ENCODE measurements at regions of chr17 and their contacts with region 1.

Region 1: DNA sequence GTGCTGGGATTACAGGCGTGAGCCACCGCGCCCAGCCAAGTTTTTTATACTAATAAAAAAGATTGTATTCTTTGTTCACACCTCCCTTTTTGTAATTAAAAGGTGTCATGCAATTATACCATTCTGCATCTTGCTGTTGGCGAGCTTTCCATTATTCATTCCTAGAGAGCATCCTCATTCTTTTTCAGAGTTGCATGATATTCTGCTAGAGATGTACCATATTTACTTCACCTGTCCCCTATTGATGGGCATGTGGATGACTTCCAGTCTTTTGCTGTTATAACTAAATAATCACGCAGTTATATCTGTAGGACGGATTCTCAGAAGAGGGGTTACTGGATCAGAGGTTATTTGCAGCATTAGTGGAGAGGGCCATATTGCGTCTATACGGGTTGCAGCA is 17.0 kb downstream of the SGSM2 start:
- DNase-seq: no peak
- H3K4me3 ChIP-seq: no peak overlapping the region
- CTCF ChIP-seq: no peak

Region 2: DNA sequence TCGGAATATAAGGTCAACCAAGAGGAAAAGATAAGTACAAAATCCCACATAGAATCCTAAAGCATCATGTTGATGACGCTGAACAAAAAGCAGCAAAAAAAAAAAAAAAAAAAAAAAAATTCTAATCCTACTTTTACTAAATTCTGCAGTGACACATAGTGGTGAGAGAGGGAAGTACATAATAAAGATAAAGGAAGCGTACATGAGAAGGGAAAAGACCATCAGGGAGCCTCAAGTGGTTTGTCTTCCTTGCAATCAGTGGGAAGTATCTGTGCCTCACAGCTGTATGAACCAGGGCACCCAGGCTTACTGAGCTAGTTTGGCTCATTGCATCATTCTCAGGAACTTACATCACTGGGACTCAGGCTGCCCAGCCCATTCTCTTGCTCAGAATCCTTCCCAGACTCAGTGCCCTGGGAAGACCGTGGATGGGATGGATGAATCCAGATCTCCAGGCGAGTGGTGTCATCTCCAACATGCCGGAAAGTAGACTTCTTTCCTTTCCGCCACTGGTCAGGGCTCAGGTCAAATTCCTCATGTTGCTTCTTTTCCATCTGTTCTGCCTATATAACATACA is 71.9 kb before region 1 on chr17:
- CTCF ChIA-PET with region 1: interaction called, 12 read pairs
- POLR2A ChIA-PET with region 1: no interaction called
- DNase-seq: peak; percentile 55
- H3K4me3 ChIP-seq: no peak overlapping the region
- CTCF ChIP-seq: peak; percentile 33

Region 3: GRCh38 chr17:2336215-2336851 is 18.0 kb before region 1 on chr17 and contains the start of gene TSR1:
- CTCF ChIA-PET with region 1: interaction called, 23 read pairs
- POLR2A ChIA-PET with region 1: interaction called, 3 read pairs
- DNase-seq: peak; percentile 28
- H3K4me3 ChIP-seq: peak within 1 kb of the TSS; percentile 93
- CTCF ChIP-seq: peak; percentile 58

Region 4: DNA sequence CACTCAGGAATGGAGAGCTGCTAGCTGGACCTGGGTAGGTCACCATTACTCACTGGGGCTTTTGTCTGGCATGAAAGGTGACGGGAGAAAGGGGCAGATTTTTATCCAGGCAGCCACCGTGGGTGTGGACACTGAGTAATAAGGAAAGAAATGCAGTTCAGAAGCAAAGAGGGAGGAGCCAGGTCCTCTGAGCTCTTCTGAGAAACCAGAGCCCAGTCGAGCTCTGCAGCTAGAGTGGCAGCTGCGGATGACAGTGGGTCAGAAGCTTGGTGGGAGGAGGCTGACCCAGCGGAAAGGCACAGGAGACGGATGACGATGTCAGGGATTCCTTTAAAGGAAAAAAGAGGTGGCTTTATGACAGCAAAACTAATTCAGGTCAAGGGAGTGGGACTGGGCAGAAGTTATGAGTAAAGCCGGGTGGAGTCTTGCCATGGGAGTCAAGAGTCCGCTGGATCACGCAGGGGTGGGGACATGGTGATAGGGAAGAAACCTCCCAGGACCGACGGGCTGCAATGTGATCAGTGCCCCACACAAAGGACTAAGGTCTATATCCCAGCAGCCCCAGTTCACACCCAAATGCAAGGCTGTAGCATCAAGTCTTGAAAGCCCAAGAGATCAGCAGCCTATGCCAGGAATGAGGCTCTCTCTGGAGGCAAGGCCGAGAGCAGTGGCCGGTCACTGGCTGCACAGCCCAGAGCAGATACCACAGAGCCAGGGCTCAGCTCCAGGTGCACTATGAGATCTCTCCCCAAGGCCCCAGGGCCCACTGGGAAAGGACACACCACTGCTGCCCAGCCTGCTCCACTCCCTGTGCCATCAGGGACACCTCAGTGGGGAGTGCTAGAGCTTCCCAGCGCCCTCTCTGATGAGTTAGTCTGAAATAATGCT is 52.8 kb after region 1 on chr17:
- CTCF ChIA-PET with region 1: interaction called, 14 read pairs
- POLR2A ChIA-PET with region 1: no interaction called
- DNase-seq: no peak
- H3K4me3 ChIP-seq: no peak overlapping the region
- CTCF ChIP-seq: no peak

Measured in AG04449 (cell line).